ENCODE measurements at regions of chr14 and their contacts with region 1.

Region 1: DNA sequence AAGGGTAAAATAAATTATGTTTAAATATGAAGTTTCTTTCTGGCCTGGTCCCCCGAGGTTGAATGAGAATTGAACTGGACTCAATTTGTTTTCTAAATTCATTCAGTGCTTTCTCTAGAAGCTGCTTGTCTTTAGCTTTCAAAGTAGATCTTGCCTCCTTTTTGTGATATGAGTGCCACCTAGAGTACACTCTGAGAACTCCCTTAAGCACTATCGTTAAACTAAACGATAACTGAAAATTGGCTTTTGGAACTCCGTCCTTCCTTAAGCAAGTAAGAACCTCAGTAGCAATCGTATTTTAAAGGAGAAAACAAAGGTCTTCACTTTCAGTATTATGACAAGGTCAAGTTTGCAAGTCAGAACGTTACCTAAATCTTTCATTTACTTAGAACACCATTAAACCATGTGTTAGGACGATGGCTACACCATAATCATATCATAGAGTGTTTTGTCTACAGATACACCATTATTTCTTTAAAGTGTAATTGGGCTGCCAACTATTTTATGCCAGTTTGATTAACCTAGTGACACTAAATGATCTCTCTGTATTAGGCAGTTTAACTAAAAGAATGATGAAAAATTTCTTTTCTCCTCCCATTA is 364.8 kb downstream of the SNAPC1 start:
- DNase-seq: peak in 1 of 2 experiments; percentile 61
- H3K4me3 ChIP-seq: no peak overlapping the region
- H3K27ac ChIP-seq: no peak overlapping the region
- H3K4me1 ChIP-seq: no peaks in the 10 kb centered on the region
- H3K27me3 ChIP-seq: no peaks in the 10 kb centered on the region
- CTCF ChIP-seq: peak; percentile 96

Region 2: GRCh38 chr14:60628892-60629291 is 1498.1 kb before region 1 on chr14:
- CTCF ChIA-PET with region 1: no interaction called
- POLR2A ChIA-PET with region 1: no interaction called
- intact Hi-C with region 1: loop called (anchors 5 kb)
- DNase-seq: no peak
- H3K4me3 ChIP-seq: no peak overlapping the region
- H3K27ac ChIP-seq: no peak overlapping the region
- H3K4me1 ChIP-seq: no peaks in the 10 kb centered on the region
- H3K27me3 ChIP-seq: no peaks in the 10 kb centered on the region
- CTCF ChIP-seq: no peak

Region 3: DNA sequence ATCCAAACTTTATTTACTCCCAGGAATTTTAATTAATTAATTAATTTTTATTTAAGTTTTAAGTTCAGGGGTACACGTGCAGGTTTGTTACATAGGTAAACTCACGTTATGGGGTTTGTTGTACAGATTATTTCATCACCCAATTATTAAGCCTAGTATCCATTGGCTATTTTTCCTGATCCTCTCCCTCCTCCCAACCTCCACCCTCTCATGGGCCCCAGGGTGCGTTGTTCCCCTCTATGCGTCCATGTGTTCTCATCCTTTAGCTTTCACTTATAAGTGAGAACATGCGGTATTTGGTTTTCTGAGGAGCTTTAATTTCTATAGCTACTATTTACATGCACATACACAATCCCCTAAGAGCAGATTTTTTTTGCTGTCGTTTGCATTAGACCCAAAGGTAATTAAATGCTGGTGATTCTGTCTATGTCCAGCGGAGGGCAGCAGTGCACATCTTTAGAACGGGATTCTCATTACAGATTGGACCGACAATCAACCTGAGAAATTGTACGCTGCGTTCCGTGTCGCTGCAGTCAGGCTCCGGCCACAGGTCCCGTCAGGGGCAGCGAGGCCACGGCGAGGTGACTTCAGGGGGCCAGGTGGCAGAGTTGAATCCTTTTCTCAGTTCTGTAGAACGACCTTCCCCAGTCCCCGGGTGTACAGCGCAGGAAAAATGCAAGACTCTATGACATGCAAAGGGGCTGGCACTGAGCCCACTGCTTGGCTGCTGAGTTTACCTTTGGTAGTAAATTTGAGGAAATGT is 857.5 kb before region 1 on chr14:
- CTCF ChIA-PET with region 1: no interaction called
- POLR2A ChIA-PET with region 1: no interaction called
- intact Hi-C with region 1: loop called (anchors 1 kb)
- DNase-seq: peak; percentile 71 to 80
- H3K4me3 ChIP-seq: peak overlapping the region; percentile 58
- H3K27ac ChIP-seq: no peak overlapping the region
- H3K4me1 ChIP-seq: no peaks in the 10 kb centered on the region
- H3K27me3 ChIP-seq: no peaks in the 10 kb centered on the region
- CTCF ChIP-seq: peak; percentile 92

Region 4: GRCh38 chr14:61461808-61462275 is 665.1 kb before region 1 on chr14:
- CTCF ChIA-PET with region 1: no interaction called
- POLR2A ChIA-PET with region 1: no interaction called
- intact Hi-C with region 1: loop called (anchors 1 kb)
- DNase-seq: peak; percentile 48 to 70
- H3K4me3 ChIP-seq: no peak overlapping the region
- H3K27ac ChIP-seq: peak overlapping the region; percentile 66
- H3K4me1 ChIP-seq: peaks cover 56% of the 10 kb centered on the region
- H3K27me3 ChIP-seq: no peaks in the 10 kb centered on the region
- CTCF ChIP-seq: peak; percentile 93

Region 5: DNA sequence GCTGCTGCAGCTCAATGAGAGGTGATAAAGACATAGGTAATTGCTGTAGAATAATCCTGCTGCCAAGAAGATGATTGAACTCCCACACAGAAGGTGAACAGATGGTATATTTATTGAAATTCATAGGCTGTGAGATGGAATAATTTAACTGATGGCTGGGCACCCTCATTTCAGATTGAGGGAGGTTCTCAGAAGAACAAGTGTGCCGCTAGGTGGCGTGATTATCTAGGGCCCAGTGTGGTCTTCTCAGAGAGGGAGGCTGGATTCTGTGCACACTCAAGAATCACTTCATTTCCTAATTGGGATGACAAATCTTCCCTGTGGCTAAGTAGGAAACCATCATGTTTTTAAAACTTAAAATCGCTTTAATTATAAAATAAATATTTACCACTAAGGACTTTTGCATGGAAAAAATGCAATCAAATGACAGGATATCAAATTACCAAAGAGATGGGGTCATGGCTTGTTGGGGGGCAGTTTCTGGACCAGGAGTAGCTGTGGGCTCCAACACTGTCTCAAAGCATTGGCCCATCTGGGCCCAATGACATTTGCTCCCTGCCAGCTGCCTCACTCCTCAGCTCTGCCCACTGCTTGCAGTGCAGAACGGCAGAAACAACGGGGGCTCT is 232.4 kb before region 1 on chr14:
- CTCF ChIA-PET with region 1: interaction called, 15 read pairs
- POLR2A ChIA-PET with region 1: no interaction called
- intact Hi-C with region 1: loop called (anchors 1 kb)
- DNase-seq: peak; percentile 64 to 65
- H3K4me3 ChIP-seq: no peak overlapping the region
- H3K27ac ChIP-seq: no peak overlapping the region
- H3K4me1 ChIP-seq: no peaks in the 10 kb centered on the region
- H3K27me3 ChIP-seq: no peaks in the 10 kb centered on the region
- CTCF ChIP-seq: peak; percentile 91

Region 6: GRCh38 chr14:61925043-61925442 is 201.9 kb before region 1 on chr14:
- CTCF ChIA-PET with region 1: no interaction called
- POLR2A ChIA-PET with region 1: no interaction called
- intact Hi-C with region 1: loop called (anchors 10 kb)
- DNase-seq: no peak
- H3K4me3 ChIP-seq: no peak overlapping the region
- H3K27ac ChIP-seq: no peak overlapping the region
- H3K4me1 ChIP-seq: peaks cover 47% of the 10 kb centered on the region
- H3K27me3 ChIP-seq: no peaks in the 10 kb centered on the region
- CTCF ChIP-seq: no peak

Measured in PC-9 (cell line).